Heart right ventricle (tissue), 16 donors: ENCODE measurements at regions of chr12 and their contacts with region 1.

Region 1: DNA sequence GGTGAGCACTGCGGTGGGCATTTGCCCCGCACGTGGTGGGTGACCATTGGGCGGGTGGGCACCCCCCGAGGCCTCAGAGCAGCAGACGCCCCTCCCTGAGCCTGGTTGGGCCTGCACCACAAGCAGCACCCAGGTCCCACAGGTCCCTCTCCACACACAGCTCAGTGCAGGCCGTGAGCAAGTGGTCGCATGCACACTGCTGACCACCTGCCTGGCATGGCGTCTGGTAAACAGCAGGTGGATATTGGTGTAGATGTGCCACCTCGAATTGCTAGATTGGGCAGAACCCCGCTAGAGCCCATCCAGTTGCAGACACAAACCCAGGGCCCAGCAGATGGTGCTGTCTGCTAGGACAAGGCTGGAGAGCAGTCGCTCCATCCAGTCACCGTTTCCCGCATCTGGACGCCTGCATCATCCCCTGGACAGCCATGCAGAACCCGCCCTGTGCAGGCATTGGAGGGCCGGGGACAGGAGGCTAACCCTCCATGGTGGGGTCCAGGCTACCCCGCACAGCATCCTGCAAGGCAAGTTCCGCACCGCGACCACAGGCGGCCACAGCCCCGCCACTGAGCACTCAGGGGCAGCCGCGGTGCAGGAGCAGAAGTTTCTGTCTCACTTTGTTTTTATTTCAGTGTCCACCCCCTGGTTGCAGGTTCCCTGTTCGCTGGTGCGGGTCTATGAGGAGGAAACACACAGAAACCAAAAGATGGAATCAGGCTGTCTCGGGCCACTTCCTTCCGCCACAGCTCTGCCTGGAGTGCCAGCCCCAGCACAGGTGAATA is 45.6 kb upstream of the RIMBP2 start:
- DNase-seq: peak in 1 of 2 donors; percentile 28
- ATAC-seq: peak in 7 of 8 donors; percentile 58 to 83 (median 69)
- H3K4me3 ChIP-seq: no peak overlapping the region
- H3K27ac ChIP-seq: no peak overlapping the region
- H3K4me1 ChIP-seq: no peaks in the 10 kb centered on the region
- H3K27me3 ChIP-seq: peaks cover 0 to 40% (median 29%) of the 10 kb centered on the region in 7 donors
- CTCF ChIP-seq: peak; percentile 19 to 60 (median 51)

Region 2: GRCh38 chr12:130818635-130819576 is 57.2 kb after region 1 on chr12:
- intact Hi-C with region 1: loop called in 3 of 10 experiments (anchors 5 kb)
- DNase-seq: peak; percentile 46 to 73
- ATAC-seq: peak; percentile 93 to 97 (median 95)
- H3K4me3 ChIP-seq: peak overlapping the region in 9 of 10 donors; percentile 21 to 70 (median 57)
- H3K27ac ChIP-seq: peak overlapping the region in 4 of 10 donors; percentile 12 to 47 (median 30)
- H3K4me1 ChIP-seq: peaks cover 0 to 12% (median 7%) of the 10 kb centered on the region in 9 donors
- H3K27me3 ChIP-seq: no peaks in the 10 kb centered on the region
- CTCF ChIP-seq: peak; percentile 71 to 98 (median 91)